Activated B cell treated with CpG ODN at 0.5 μM for 24 hours (primary cell): ENCODE measurements at regions of chr10 and their contacts with region 1.

Region 1: GRCh38 chr10:102480396-102480795 is 22.1 kb downstream of the ACTR1A start:
- DNase-seq: no peak
- ATAC-seq: no peak
- H3K4me3 Mint-ChIP-seq: no peak overlapping the region
- H3K27ac Mint-ChIP-seq: no peak overlapping the region
- H3K4me1 Mint-ChIP-seq: peaks cover 7% of the 10 kb centered on the region
- H3K27me3 Mint-ChIP-seq: no peaks in the 10 kb centered on the region
- CTCF ChIP-seq: no peak

Region 2: GRCh38 chr10:102064868-102065560 is 415.4 kb before region 1 on chr10 and contains the start of gene HPS6:
- CTCF ChIA-PET with region 1: no interaction called
- POLR2A ChIA-PET with region 1: no interaction called
- intact Hi-C with region 1: no loop called
- DNase-seq: peak; percentile 88
- ATAC-seq: peak; percentile 97
- H3K4me3 Mint-ChIP-seq: peak within 1 kb of the TSS; percentile 89
- H3K27ac Mint-ChIP-seq: peak within 1 kb of the TSS; percentile 90
- H3K4me1 Mint-ChIP-seq: peaks cover 24% of the 10 kb centered on the region
- H3K27me3 Mint-ChIP-seq: no peaks in the 10 kb centered on the region
- CTCF ChIP-seq: no peak
- total RNA-seq, gene HPS6: 22.8 and 23.0 TPM in 2 replicates

Region 3: GRCh38 chr10:102167861-102168260 is 312.5 kb before region 1 on chr10:
- CTCF ChIA-PET with region 1: interaction called, 3 read pairs
- POLR2A ChIA-PET with region 1: interaction called, 5 read pairs
- intact Hi-C with region 1: loop called (anchors 1 kb)
- DNase-seq: no peak
- ATAC-seq: no peak
- H3K4me3 Mint-ChIP-seq: no peak overlapping the region
- H3K27ac Mint-ChIP-seq: no peak overlapping the region
- H3K4me1 Mint-ChIP-seq: peaks cover 5% of the 10 kb centered on the region
- H3K27me3 Mint-ChIP-seq: no peaks in the 10 kb centered on the region
- CTCF ChIP-seq: no peak

Region 4: GRCh38 chr10:102231357-102232318 is 248.8 kb before region 1 on chr10:
- CTCF ChIA-PET with region 1: interaction called, 33 read pairs
- POLR2A ChIA-PET with region 1: no interaction called
- intact Hi-C with region 1: loop called (anchors 1 kb)
- DNase-seq: peak; percentile 68
- ATAC-seq: peak; percentile 65
- H3K4me3 Mint-ChIP-seq: peak overlapping the region; percentile 82
- H3K27ac Mint-ChIP-seq: no peak overlapping the region
- H3K4me1 Mint-ChIP-seq: peaks cover 14% of the 10 kb centered on the region
- H3K27me3 Mint-ChIP-seq: peaks cover 57% of the 10 kb centered on the region
- CTCF ChIP-seq: no peak

Region 5: GRCh38 chr10:102375250-102375649 is 105.1 kb before region 1 on chr10:
- CTCF ChIA-PET with region 1: interaction called, 5 read pairs
- POLR2A ChIA-PET with region 1: no interaction called
- intact Hi-C with region 1: loop called (anchors 1 kb)
- DNase-seq: no peak
- ATAC-seq: peak; percentile 66
- H3K4me3 Mint-ChIP-seq: no peak overlapping the region
- H3K27ac Mint-ChIP-seq: no peak overlapping the region
- H3K4me1 Mint-ChIP-seq: no peaks in the 10 kb centered on the region
- H3K27me3 Mint-ChIP-seq: no peaks in the 10 kb centered on the region
- CTCF ChIP-seq: no peak

Region 6: DNA sequence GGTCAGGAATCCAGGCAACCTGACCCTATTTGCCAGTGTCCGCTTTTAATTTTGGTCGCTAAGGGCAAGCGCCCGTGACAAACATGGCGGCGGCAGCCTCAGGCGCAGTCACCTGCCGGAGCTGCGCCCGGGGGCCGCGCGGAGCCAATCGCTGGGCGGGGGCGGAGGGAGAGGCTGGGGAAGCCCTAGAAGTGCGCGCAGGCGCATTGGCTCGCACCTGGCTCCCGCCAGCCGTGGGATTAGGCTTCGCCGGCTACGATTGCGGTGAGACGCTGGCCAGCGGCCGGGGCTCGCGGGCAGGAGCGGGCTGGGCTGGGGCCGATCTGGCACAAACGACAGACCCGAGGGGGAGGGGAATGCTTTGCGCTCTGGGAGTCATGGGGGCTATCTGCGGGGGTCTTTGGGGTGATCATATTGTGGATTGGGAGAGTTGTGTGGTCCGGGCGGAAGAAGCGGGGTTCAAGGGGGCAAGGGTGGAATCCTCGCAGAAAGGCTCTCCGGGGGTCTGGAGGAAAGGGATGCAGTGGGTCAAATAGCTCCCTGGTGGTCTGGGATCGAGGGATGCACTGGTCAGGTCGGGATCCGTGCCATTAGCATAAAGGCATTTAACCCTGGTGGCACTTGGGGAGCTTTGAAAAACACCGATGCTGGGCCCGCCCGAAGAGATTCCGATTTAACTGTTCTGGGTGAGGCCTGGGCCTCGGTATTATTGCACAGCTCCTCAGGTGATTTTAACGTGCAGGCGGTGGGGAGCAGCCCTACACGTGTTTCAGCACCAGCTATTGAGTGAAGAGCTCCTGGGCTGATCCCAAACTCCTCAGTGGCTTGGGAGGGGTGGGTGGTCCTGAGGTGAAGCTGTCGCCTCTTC is 19.0 kb before region 1 on chr10:
- CTCF ChIA-PET with region 1: interaction called, 7 read pairs
- POLR2A ChIA-PET with region 1: interaction called, 5 read pairs
- intact Hi-C with region 1: loop called (anchors 2 kb)
- DNase-seq: peak; percentile 90
- ATAC-seq: peak; percentile 99
- H3K4me3 Mint-ChIP-seq: peak overlapping the region; percentile 88
- H3K27ac Mint-ChIP-seq: peak overlapping the region; percentile 85
- H3K4me1 Mint-ChIP-seq: peaks cover 31% of the 10 kb centered on the region
- H3K27me3 Mint-ChIP-seq: no peaks in the 10 kb centered on the region
- CTCF ChIP-seq: no peak

Region 7: GRCh38 chr10:102502029-102502335 is 21.6 kb after region 1 on chr10:
- CTCF ChIA-PET with region 1: no interaction called
- POLR2A ChIA-PET with region 1: no interaction called
- intact Hi-C with region 1: no loop called
- DNase-seq: peak; percentile 91
- ATAC-seq: peak; percentile 75
- H3K4me3 Mint-ChIP-seq: no peak overlapping the region
- H3K27ac Mint-ChIP-seq: no peak overlapping the region
- H3K4me1 Mint-ChIP-seq: peaks cover 25% of the 10 kb centered on the region
- H3K27me3 Mint-ChIP-seq: no peaks in the 10 kb centered on the region
- CTCF ChIP-seq: no peak